ENCODE measurements at regions of chr17 and their contacts with region 1.

Region 1: GRCh38 chr17:80219013-80219762 is 945 bp downstream of the SGSH start:
- DNase-seq: peak; percentile 75
- ATAC-seq: peak; percentile 89
- H3K4me3 Mint-ChIP-seq: peak overlapping the region; percentile 90
- H3K27ac Mint-ChIP-seq: peak overlapping the region; percentile 92
- H3K4me1 Mint-ChIP-seq: peaks cover 20% of the 10 kb centered on the region
- H3K27me3 Mint-ChIP-seq: no peaks in the 10 kb centered on the region
- CTCF ChIP-seq: no peak

Region 2: DNA sequence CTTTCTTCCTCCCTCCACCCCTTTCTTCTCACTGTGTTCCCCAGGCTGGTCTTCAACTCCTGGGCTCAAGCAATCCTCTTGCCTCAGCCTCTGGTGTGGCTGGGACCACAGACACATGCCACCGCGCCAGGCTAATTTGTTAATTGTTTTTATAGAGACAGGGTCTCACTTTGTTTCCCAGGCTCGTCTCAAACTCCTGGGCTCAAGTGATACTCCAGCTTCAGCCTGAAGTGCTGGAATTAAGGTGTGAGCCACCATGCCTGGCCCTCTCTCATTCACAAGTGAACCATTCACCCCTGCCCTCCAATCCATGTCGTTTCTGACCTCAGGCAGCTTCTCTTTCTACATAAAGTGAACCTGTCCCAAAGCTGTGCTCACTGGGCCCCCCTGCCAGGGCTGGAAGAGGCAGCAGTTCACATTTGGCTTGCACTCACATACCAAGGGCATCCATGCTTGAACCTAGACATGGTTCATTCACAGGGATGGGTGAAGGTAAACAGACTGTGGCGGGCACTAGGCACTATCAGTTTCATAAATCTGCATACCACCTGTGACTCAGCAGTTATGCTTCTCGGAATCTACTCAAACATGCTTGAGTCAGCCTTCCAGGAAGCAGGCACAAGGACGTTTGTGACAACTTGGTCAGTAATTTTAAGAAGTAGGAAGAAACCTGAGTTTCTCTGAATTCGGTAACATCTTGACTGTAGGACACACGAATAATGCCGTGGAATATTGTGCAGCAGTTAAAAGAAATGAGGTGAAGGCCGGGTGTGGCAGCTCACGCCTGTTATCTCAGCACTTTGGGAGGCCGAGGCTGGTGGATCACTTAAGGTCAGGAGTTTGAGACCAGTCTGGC is 35.4 kb after region 1 on chr17:
- CTCF ChIA-PET with region 1: interaction called, 3 read pairs
- POLR2A ChIA-PET with region 1: interaction called, 3 read pairs
- intact Hi-C with region 1: loop called (anchors 2 kb)
- DNase-seq: no peak
- ATAC-seq: peak; percentile 74
- H3K4me3 Mint-ChIP-seq: peak overlapping the region; percentile 50
- H3K27ac Mint-ChIP-seq: peak overlapping the region; percentile 67
- H3K4me1 Mint-ChIP-seq: peaks cover 40% of the 10 kb centered on the region
- H3K27me3 Mint-ChIP-seq: no peaks in the 10 kb centered on the region
- CTCF ChIP-seq: no peak

Region 3: DNA sequence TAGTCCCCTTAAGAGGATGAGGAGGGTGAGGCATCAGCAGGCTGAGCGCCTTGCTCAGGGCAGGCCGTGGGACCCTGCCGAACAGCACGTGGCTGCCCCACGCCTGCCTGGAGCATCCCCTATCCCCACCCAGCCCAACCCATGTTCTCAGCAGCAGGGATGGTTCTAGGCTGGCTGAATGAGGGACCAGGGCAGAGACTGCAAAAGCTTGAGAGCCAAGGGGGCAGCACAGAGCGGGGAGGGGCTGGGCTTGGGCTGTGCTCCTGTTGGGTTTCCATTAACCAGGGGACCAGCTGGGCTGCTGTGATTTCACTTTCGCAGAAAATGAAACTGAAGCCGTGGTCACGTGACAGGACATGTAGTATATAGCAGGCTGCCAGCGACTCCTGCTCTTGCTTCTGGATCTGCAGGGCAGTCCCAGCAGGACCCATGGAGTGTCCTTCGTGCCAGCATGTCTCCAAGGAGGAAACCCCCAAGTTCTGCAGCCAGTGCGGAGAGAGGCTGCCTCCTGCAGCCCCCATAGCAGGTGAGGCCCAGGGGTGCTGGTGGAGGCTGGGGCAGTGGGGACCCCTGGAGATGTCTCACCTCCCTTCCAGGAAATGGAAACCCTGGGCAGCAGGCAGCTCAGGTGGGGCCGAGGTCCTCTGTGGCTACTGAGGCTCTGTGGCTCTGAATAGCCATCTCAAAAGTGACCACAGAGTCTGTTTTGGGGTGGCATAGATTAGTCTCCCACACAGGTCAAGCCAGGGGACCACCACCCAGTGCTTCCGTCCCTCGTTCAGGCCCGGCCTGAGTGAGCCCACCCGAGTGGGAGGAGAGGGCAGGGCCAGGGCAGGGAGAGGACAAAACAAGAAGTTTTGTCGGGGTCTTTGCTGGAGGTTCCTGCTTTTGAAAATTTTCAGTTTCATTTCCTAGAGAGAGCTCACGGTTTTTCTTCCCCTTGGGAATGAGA is 44.3 kb after region 1 on chr17:
- CTCF ChIA-PET with region 1: no interaction called
- POLR2A ChIA-PET with region 1: interaction called, 17 read pairs
- intact Hi-C with region 1: loop called (anchors 1 kb)
- DNase-seq: peak; percentile 73
- ATAC-seq: peak; percentile 64
- H3K4me3 Mint-ChIP-seq: peak overlapping the region; percentile 93
- H3K27ac Mint-ChIP-seq: peak overlapping the region; percentile 90
- H3K4me1 Mint-ChIP-seq: peaks cover 64% of the 10 kb centered on the region
- H3K27me3 Mint-ChIP-seq: no peaks in the 10 kb centered on the region
- CTCF ChIP-seq: no peak